ENCODE measurements at regions of chr16 and their contacts with region 1.

Region 1: DNA sequence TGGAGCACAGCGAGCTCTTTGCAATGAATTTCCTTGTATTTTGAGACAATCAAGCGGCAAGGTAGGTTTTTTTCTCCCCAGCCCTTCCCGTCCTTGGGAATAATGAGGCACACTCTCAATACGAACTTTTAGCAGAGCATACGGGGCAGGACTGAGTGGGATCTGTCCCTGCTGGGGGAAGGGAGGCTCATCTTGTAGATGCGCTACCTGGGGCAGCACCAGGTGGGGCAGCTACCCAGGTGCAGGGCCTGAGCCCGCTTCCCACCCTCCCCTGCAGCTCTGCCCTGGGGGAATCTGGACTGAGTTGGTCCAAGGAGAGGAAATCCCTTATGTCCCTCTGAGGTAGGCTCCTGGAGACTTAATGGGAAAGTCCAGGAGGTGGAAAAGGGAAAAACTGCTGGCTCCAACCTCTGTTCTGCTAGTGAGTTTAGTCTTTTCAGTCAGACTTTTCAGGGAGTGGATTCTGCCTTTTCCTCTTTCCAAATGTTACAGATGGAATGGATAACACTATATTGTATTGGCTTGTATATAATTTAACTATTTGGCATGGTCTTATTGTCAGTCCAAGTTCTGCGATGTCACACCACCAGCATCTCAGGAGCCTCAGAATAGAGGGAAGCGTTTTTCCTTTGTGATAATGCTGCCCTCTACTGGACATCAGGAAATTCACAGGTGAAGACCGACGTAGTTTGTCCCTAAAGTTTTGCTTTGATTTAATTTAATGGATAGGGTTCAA is 9.6 kb upstream of the CES1 start:
- DNase-seq: peak; percentile 36 to 64
- ATAC-seq: peak; percentile 84 to 92; a peak in 5 of 6 replicates
- H3K4me3 ChIP-seq: no peak overlapping the region
- H3K27ac ChIP-seq: no peak overlapping the region
- H3K4me1 ChIP-seq: no peaks in the 10 kb centered on the region
- CTCF ChIP-seq: peak; percentile 76
- EP300 ChIP-seq: no peak
- POLR2A ChIP-seq: no peak
- RAD21 ChIP-seq: peak; percentile 82 to 92

Region 2: GRCh38 chr16:55711959-55712876 is 130.3 kb before region 1 on chr16:
- CTCF ChIA-PET with region 1: interaction called, 58 read pairs
- POLR2A ChIA-PET with region 1: no interaction called
- DNase-seq: peak; percentile 58 to 70
- ATAC-seq: peak; percentile 84 to 99; a peak in 4 of 6 replicates
- H3K4me3 ChIP-seq: no peak overlapping the region
- H3K27ac ChIP-seq: no peak overlapping the region
- H3K4me1 ChIP-seq: no peaks in the 10 kb centered on the region
- CTCF ChIP-seq: peak; percentile 79
- EP300 ChIP-seq: no peak
- POLR2A ChIP-seq: no peak
- RAD21 ChIP-seq: peak; percentile 75 to 81

Region 3: DNA sequence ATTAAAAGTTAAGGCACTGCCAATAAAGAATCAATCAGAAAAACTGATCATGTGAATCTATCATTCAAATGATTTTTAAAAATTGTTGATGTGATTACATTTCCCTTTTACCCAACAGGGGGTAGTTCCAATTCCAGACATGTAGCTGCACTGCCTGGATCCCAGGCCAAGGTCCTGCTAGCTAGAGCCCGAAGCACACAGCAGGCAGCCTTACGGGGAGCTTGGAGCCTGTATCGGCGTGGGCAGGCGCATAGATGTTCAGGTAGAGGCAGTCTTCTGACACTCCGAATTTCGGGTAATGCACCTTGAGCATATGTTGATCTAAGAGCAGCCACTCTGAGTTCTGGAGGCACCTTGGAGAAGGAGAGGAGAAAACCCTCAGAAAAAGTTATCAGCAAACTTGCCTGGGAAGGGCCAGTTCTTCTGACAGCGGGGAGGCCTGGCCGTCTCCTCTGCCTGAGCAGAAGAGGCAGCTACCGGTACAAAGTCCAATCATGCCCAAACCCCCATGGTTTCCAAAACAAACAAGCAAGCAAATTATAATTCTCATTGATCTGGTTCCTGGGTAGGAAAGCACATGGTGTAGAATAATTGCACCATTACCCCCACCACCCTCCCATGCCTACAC is 29.0 kb after region 1 on chr16:
- CTCF ChIA-PET with region 1: no interaction called
- POLR2A ChIA-PET with region 1: no interaction called
- DNase-seq: no peak
- ATAC-seq: no peak
- H3K4me3 ChIP-seq: no peak overlapping the region
- H3K27ac ChIP-seq: no peak overlapping the region
- H3K4me1 ChIP-seq: no peaks in the 10 kb centered on the region
- CTCF ChIP-seq: no peak
- EP300 ChIP-seq: no peak
- POLR2A ChIP-seq: no peak
- RAD21 ChIP-seq: no peak